ENCODE measurements at regions of chr16 and their contacts with region 1.

Region 1: GRCh38 chr16:75064403-75065148 is 52.0 kb downstream of the LDHD start:
- DNase-seq: no peak

Region 2: DNA sequence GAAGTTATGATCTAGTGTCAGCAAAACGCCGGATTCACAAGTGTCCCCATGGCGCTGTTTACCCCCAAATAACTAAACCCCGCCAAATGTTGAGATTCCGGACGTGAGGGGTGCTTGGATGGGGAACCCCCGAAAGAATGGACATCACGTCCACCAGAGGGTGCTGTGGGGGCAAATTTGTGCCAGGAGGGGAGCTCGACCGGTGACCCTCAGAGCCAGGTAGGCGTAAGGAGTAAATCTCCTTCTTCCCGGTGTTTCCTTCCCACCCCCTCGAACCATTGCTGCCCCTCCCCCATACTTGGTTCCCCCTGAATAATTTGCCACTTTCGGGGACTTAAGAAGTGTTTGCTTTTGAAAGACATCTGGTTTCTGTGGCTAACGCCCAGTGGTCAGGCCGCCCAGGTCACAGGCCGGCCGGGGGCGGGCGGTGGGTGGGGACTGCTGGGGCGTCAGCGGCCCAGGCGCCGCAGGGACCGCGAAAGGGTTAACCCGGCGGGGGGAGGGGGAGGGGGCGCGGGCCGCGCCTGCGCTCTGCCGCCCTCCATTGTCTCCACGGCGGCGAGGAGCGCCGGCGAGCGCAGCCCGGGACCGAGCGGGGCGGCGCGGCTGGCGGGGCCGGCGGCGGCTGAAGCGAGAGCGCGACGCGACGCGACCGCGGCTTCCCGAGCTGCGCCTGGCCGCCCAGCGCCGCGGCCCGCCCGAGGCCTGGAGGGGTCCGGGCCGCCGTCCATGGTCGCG is 65.9 kb before region 1 on chr16 and contains the start of gene ZNRF1:
- intact Hi-C with region 1: loop called (anchors 10 kb)
- DNase-seq: peak; percentile 52 to 90 (median 80)